ENCODE measurements at regions of chr1 and their contacts with region 1.

Region 1: GRCh38 chr1:224427346-224427745 is 7.3 kb downstream of the WDR26 start:
- DNase-seq: no peak
- ATAC-seq: peak; percentile 46
- H3K4me3 ChIP-seq: no peak overlapping the region
- H3K27ac ChIP-seq: peak overlapping the region in 1 of 2 donors; percentile 44
- H3K4me1 ChIP-seq: peaks cover 2 to 4% of the 10 kb centered on the region in 2 donors
- H3K27me3 ChIP-seq: no peaks in the 10 kb centered on the region

Region 2: DNA sequence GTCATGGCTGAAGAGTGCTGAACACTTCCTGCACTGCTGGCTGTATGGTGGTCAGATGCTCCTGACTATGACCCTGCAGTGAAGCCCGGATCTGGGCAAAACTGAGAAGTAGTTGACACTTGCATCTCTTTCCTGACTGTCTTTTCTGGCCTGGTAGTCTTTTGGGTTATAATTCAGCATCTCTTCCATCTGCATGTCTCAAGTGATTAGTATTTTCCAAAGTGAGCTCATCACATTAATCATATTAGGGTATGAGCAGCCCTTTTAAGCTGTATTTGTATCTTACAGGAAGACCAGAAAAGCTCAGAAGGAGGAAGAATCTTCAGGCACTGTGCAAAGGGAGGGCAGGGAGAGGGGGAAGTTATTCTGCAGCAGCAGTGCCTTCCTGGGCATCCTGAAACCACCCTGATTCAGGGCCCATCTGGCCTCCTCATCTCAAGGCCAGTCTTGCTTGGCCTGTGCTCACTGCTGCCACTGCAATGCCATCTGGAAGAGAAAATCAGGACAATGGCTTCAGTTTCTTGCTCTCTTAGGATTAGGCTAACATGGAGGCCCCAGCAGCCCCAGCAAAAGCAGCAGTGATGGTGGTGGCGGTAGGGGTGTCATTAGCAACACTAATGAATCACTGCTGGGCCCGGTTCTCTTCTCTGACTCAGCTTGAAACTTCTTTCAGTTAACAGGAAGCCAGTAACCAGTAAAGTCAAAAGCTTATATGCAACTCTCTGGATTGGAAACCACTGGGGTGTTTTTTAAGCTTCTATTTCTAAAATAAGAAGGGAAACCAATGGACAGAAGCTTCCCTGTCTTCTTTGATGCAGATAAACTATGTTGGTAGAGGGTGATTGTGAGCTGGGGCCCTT is 70.6 kb after region 1 on chr1:
- intact Hi-C with region 1: loop called in 1 of 2 experiments (anchors 5 kb)
- DNase-seq: peak; percentile 79 to 80
- ATAC-seq: peak; percentile 43
- H3K4me3 ChIP-seq: no peak overlapping the region
- H3K27ac ChIP-seq: peak overlapping the region; percentile 33 to 87
- H3K4me1 ChIP-seq: no peaks in the 10 kb centered on the region
- H3K27me3 ChIP-seq: no peaks in the 10 kb centered on the region